Caco-2 (cell line): ENCODE measurements at regions of chr6 and their contacts with region 1.

Region 1: DNA sequence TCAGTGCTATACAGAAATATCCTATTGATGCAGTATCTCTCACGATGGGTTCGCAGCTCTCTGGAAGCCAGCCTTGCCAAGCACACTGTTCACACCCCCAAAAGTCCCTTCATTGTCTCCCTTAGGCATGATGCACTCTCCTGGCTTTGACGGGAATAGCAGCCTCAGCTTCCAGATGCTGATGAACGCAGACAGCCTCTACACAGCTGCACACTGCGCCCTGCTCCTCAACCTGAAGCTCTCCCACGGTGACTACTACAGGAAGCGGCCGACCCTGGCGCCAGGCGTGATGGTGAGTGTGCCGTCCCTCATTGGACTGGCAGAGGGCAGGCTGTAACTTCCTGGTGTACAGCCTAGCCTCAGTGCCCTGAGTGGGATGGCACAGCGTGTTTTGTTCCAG is 60.0 kb upstream of the PBOV1 start:
- DNase-seq: peak; percentile 43 to 53
- H3K4me3 ChIP-seq: no peak overlapping the region
- H3K4me3 Mint-ChIP-seq: no peak overlapping the region
- H3K27ac Mint-ChIP-seq: no peak overlapping the region
- H3K4me1 ChIP-seq: no peaks in the 10 kb centered on the region
- H3K4me1 Mint-ChIP-seq: no peaks in the 10 kb centered on the region
- H3K27me3 ChIP-seq: no peaks in the 10 kb centered on the region
- H3K27me3 Mint-ChIP-seq: no peaks in the 10 kb centered on the region
- CTCF ChIP-seq: peak; percentile 28 to 75

Region 2: DNA sequence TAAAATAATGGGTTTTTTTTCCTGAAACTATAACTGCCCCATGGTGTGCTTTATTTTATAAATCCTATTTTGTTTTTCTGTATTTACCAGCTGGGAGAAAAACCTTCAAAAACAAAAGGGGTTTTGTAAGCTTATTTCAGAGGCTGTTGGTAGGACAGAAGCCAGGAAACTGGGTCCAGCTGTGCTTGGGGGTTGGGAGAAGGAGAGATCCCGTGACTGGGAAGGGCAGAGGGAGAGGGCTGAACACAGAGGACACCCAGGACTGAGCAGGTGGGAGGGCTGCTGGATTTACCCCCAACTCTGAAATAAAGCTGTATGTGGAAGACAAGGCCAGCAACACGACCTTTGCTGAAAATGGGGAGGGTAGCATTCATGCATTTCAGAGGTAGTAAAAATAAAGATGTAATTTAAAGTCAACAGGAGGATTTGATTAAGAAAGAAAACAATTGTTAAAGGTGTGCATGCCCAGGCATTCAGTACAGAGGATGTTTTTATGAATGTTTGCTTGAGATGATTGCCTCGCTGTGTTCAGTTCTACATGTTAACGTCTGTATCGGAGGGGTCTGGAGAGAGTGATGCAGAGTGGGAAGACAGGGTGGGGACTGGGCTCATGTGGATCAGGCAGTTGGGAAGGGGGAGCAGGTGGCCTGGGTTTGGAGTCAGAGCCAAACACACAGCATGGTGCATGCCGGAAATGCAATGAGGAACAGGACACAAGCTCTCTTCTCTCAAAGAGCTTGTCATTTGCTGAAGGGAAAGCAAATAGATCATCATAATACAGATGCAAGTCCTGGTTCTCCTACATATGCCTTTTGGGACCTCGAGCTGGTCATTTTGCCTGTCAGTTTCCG is 95.2 kb before region 1 on chr6:
- CTCF ChIA-PET with region 1: no interaction called
- POLR2A ChIA-PET with region 1: no interaction called
- intact Hi-C with region 1: no loop called
- DNase-seq: no peak
- H3K4me3 ChIP-seq: no peak overlapping the region
- H3K4me3 Mint-ChIP-seq: no peak overlapping the region
- H3K27ac Mint-ChIP-seq: no peak overlapping the region
- H3K4me1 ChIP-seq: no peaks in the 10 kb centered on the region
- H3K4me1 Mint-ChIP-seq: no peaks in the 10 kb centered on the region
- H3K27me3 ChIP-seq: no peaks in the 10 kb centered on the region; the same call in 1 of the 2 replicates
- H3K27me3 Mint-ChIP-seq: no peaks in the 10 kb centered on the region
- CTCF ChIP-seq: no peak

Region 3: DNA sequence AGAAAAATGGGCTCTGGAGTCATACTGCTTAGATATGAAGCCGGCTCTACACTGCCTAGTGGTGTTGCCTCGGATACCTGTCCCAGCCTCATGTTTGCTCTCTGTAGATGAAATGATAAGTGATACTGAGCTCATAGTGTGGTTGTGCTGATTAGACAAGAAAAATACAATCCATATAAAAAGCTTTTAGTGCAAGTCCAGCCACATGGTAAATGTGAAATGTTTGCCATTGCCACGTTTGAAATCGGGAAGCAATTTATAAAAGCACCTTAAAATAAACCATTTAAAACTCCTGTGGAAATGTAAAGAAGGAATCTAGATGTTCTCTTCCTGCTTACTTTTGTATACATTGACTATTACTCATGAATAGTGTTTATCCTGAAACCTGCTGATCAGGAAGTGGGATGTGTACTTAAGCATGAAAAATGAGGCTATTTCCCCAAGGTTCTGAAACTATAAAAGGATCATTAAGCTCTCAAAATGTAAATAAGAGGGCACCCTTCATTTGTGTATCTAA is 46.9 kb before region 1 on chr6:
- CTCF ChIA-PET with region 1: no interaction called
- POLR2A ChIA-PET with region 1: no interaction called
- intact Hi-C with region 1: loop called (anchors 2 kb)
- DNase-seq: peak; percentile 45 to 51
- H3K4me3 ChIP-seq: no peak overlapping the region
- H3K4me3 Mint-ChIP-seq: peak overlapping the region; percentile 25
- H3K27ac Mint-ChIP-seq: peak overlapping the region; percentile 47
- H3K4me1 ChIP-seq: peaks cover 27% of the 10 kb centered on the region
- H3K4me1 Mint-ChIP-seq: peaks cover 34% of the 10 kb centered on the region
- H3K27me3 ChIP-seq: no peaks in the 10 kb centered on the region
- H3K27me3 Mint-ChIP-seq: no peaks in the 10 kb centered on the region
- CTCF ChIP-seq: no peak